Activated T-helper 2 cell treated with anti-CD3 and anti-CD28 coated beads, Interferon-gamma antibody, Interleukin-2, Interleukin-4, amounts not matched to agents 10 μg/mL and 5 μg/mL and 100 μg/mL, durations not matched to agents 14 hours and 24 hours and 36 hours (primary cell): ENCODE measurements at regions of chr2 and their contacts with region 1.

Region 1: GRCh38 chr2:7588295-7588694 is 671.1 kb downstream of the RNF144A start:
- DNase-seq: no peak
- H3K4me3 Mint-ChIP-seq: no peak overlapping the region
- H3K27ac Mint-ChIP-seq: peak overlapping the region; percentile 66
- H3K4me1 Mint-ChIP-seq: peaks cover 42% of the 10 kb centered on the region
- H3K27me3 Mint-ChIP-seq: no peaks in the 10 kb centered on the region

Region 2: GRCh38 chr2:7417845-7418742 is 170.2 kb before region 1 on chr2:
- intact Hi-C with region 1: no loop called
- DNase-seq: no peak
- H3K4me3 Mint-ChIP-seq: no peak overlapping the region
- H3K27ac Mint-ChIP-seq: peak overlapping the region; percentile 23
- H3K4me1 Mint-ChIP-seq: peaks cover 6% of the 10 kb centered on the region
- H3K27me3 Mint-ChIP-seq: peaks cover 3% of the 10 kb centered on the region

Region 3: DNA sequence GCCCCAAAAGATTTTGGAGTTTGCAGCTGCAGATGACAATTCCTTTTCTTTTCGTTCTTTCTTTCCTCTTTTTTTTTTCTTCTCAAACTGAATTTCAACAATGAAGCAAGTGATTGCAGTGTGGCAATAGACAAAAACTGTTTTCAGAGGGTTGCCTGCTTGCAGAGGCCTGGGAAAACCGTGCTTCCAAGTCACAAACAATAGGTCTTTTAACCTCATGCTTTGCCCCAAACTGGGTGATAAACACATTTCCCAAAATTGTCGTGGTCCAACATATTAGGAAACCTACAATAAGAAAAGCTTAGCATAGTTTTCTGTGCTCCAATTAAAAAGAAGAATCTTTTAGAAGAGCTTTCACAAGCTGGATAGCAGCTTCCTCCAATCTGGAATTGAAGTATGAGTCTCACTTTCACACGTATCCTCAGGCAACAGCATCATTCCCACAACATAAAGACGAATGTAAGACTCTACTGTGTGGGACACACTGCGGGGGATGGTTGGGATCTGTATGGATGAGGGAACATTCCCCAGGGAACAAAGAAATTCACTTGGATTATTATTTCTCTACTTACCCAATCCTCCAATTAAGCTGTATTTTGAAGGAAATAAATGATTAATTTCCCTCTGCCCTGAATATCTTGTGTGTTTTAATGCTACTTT is 15.0 kb before region 1 on chr2:
- intact Hi-C with region 1: no loop called
- DNase-seq: no peak
- H3K4me3 Mint-ChIP-seq: no peak overlapping the region
- H3K27ac Mint-ChIP-seq: peak overlapping the region; percentile 82
- H3K4me1 Mint-ChIP-seq: peaks cover 63% of the 10 kb centered on the region
- H3K27me3 Mint-ChIP-seq: no peaks in the 10 kb centered on the region

Region 4: GRCh38 chr2:7649461-7650228 is 61.4 kb after region 1 on chr2:
- intact Hi-C with region 1: no loop called
- DNase-seq: no peak
- H3K4me3 Mint-ChIP-seq: no peak overlapping the region
- H3K27ac Mint-ChIP-seq: no peak overlapping the region
- H3K4me1 Mint-ChIP-seq: peaks cover 12% of the 10 kb centered on the region
- H3K27me3 Mint-ChIP-seq: no peaks in the 10 kb centered on the region

Region 5: DNA sequence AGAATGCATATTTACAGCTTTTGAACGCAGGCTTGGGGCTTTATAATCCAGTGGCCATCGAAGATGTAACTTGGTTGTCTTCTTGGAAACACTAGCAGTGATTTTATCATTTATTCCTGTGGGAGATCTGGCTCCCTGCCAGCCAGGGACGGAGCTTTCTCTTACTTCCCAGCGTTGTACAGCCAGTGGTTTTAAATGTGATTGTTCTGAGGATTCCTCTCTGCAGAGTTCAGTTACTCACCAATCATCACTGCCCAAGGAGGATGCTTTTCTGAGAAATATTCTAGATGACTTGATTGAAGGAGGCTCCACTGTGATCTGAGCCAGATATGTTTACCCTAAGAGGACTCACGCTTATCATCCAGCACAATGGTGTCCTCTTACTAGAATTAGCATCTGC is 73.2 kb after region 1 on chr2:
- intact Hi-C with region 1: loop called (anchors 5 kb)
- DNase-seq: no peak
- H3K4me3 Mint-ChIP-seq: peak overlapping the region; percentile 33
- H3K27ac Mint-ChIP-seq: peak overlapping the region; percentile 53
- H3K4me1 Mint-ChIP-seq: peaks cover 33% of the 10 kb centered on the region
- H3K27me3 Mint-ChIP-seq: no peaks in the 10 kb centered on the region